ENCODE measurements at regions of chr2 and their contacts with region 1.

Region 1: GRCh38 chr2:196205881-196206435 is 34.6 kb upstream of the STK17B start:
- DNase-seq: no peak
- H3K4me3 Mint-ChIP-seq: no peak overlapping the region
- H3K27ac Mint-ChIP-seq: no peak overlapping the region
- H3K4me1 Mint-ChIP-seq: peaks cover 37% of the 10 kb centered on the region
- H3K27me3 Mint-ChIP-seq: no peaks in the 10 kb centered on the region

Region 2: DNA sequence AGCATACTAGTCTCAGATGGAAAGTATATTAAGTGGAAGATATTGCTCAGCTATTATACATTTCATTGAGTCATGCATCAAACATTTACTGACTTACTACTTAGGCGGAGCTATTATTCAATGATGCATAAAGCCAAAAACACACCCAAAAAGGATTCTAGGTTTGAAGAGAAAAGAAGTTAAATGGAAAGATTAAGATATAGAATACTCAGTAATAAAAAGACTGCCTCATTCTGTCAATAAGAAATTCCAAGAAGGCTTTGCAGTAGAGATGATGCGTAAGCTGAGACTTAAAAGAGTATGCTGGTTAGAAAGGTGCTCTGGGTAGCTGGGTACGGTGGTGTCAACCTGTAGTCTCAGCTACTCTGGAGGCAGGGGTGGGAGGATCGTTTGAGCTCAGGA is 62.2 kb before region 1 on chr2:
- CTCF ChIA-PET with region 1: no interaction called
- intact Hi-C with region 1: loop called (anchors 1 kb)
- DNase-seq: no peak
- H3K4me3 Mint-ChIP-seq: peak overlapping the region; percentile 29
- H3K27ac Mint-ChIP-seq: peak overlapping the region; percentile 89
- H3K4me1 Mint-ChIP-seq: peaks cover 70% of the 10 kb centered on the region
- H3K27me3 Mint-ChIP-seq: no peaks in the 10 kb centered on the region

Region 3: GRCh38 chr2:196177124-196177523 is 28.8 kb before region 1 on chr2:
- CTCF ChIA-PET with region 1: interaction called, 6 read pairs
- intact Hi-C with region 1: loop called (anchors 1 kb)
- DNase-seq: no peak
- H3K4me3 Mint-ChIP-seq: peak overlapping the region; percentile 71
- H3K27ac Mint-ChIP-seq: peak overlapping the region; percentile 88
- H3K4me1 Mint-ChIP-seq: peaks cover 71% of the 10 kb centered on the region
- H3K27me3 Mint-ChIP-seq: no peaks in the 10 kb centered on the region

Region 4: GRCh38 chr2:196195302-196195701 is 10.7 kb before region 1 on chr2:
- CTCF ChIA-PET with region 1: interaction called, 5 read pairs
- intact Hi-C with region 1: loop called (anchors 1 kb)
- DNase-seq: no peak
- H3K4me3 Mint-ChIP-seq: peak overlapping the region; percentile 32
- H3K27ac Mint-ChIP-seq: no peak overlapping the region
- H3K4me1 Mint-ChIP-seq: peaks cover 66% of the 10 kb centered on the region
- H3K27me3 Mint-ChIP-seq: no peaks in the 10 kb centered on the region

Region 5: GRCh38 chr2:196233021-196233804 is 27.3 kb after region 1 on chr2:
- CTCF ChIA-PET with region 1: interaction called, 5 read pairs
- intact Hi-C with region 1: loop called (anchors 1 kb)
- DNase-seq: peak; percentile 34
- H3K4me3 Mint-ChIP-seq: no peak overlapping the region
- H3K27ac Mint-ChIP-seq: peak overlapping the region; percentile 91
- H3K4me1 Mint-ChIP-seq: peaks cover 92% of the 10 kb centered on the region
- H3K27me3 Mint-ChIP-seq: no peaks in the 10 kb centered on the region

Region 6: DNA sequence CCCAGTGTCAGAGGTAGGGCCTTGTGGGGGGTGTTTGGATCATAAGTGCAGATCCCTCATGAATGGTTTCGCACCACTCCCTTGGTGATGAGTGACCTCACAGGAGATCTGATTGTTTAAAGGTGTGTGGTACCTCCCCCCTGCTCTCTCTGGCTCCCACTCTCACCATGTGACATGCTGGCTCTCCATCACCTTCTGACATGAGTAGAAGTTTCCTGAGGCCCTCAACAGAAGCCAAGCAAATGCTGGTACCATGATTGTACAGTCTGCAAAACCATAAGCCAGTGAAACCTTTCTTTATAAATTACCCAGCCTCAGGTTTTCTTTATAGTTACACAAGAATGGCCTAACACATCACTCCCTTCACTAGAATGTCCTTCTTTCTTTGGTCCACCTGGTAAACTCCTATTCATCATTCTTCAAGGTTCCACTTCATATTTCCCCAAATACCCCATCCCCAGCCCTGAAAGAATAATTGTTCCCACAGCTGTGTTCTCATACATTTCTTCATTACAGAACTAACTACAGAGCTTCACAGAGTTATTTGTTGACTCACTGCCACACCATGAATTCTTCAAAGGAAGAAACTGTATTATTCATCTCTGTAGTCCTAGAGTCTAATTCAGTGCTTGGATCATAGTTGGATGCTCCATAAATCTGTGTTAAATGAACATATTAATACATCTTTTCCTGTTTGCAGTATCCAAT is 46.6 kb after region 1 on chr2:
- CTCF ChIA-PET with region 1: no interaction called
- intact Hi-C with region 1: loop called (anchors 1 kb)
- DNase-seq: peak; percentile 42
- H3K4me3 Mint-ChIP-seq: no peak overlapping the region
- H3K27ac Mint-ChIP-seq: peak overlapping the region; percentile 82
- H3K4me1 Mint-ChIP-seq: peaks cover 81% of the 10 kb centered on the region
- H3K27me3 Mint-ChIP-seq: no peaks in the 10 kb centered on the region

Region 7: GRCh38 chr2:196291873-196292800 is 86.2 kb after region 1 on chr2:
- CTCF ChIA-PET with region 1: no interaction called
- intact Hi-C with region 1: loop called (anchors 1 kb)
- DNase-seq: no peak
- H3K4me3 Mint-ChIP-seq: no peak overlapping the region
- H3K27ac Mint-ChIP-seq: no peak overlapping the region
- H3K4me1 Mint-ChIP-seq: peaks cover 46% of the 10 kb centered on the region
- H3K27me3 Mint-ChIP-seq: no peaks in the 10 kb centered on the region

Measured in activated naive CD4-positive, alpha-beta T cell treated with anti-CD3 and anti-CD28 coated beads for 36 hours (primary cell).